Activated B cell treated with CpG ODN at 0.5 μM for 24 hours (primary cell): ENCODE measurements at regions of chr1 and their contacts with region 1.

Region 1: DNA sequence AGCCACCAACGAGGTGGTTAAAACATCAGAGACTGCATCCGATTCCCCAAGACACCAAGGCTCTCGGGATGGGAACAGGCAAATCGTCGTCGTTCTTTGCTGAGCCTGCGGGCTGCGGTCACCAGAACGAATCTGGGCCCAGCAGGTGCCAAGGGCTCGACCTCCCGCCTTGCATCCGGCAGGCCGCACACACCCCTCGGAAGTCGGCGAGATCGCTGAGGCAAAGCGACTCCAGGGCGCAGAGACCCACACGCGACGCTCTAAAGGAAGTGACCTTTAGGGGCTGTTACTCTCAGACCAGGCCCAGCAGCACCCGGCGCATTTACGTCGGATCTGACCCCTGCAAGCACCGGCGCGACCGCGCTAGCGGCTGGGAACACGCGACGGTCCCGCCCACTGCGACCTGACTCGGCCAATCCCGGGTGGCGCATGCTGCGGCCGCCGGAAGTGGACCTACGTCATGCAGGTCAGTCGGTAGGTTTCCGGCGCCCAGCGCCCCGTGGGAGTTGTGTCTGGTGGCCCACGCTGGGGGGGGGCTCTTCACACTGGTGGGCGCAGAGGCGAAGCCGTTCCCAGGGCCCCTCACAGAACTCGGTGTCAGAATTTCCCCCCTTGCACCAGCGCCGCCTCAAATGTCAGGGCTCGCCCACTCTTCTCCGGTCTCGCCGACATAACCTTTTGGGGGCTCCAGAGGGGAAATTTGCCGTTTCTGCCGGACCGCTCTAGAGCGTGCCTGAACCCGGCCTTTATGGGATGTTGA is 7.5 kb upstream of the PARK7 start:
- DNase-seq: peak; percentile 83
- ATAC-seq: peak; percentile 90
- H3K4me3 Mint-ChIP-seq: peak overlapping the region; percentile 89
- H3K27ac Mint-ChIP-seq: peak overlapping the region; percentile 95
- H3K4me1 Mint-ChIP-seq: peaks cover 15% of the 10 kb centered on the region
- H3K27me3 Mint-ChIP-seq: no peaks in the 10 kb centered on the region
- CTCF ChIP-seq: no peak

Region 2: GRCh38 chr1:7912743-7913557 is 41.1 kb before region 1 on chr1:
- CTCF ChIA-PET with region 1: no interaction called
- POLR2A ChIA-PET with region 1: interaction called, 4 read pairs
- intact Hi-C with region 1: loop called (anchors 5 kb)
- DNase-seq: peak; percentile 16
- ATAC-seq: peak; percentile 86
- H3K4me3 Mint-ChIP-seq: peak overlapping the region; percentile 91
- H3K27ac Mint-ChIP-seq: peak overlapping the region; percentile 82
- H3K4me1 Mint-ChIP-seq: peaks cover 13% of the 10 kb centered on the region
- H3K27me3 Mint-ChIP-seq: peaks cover 3% of the 10 kb centered on the region
- CTCF ChIP-seq: no peak

Region 3: DNA sequence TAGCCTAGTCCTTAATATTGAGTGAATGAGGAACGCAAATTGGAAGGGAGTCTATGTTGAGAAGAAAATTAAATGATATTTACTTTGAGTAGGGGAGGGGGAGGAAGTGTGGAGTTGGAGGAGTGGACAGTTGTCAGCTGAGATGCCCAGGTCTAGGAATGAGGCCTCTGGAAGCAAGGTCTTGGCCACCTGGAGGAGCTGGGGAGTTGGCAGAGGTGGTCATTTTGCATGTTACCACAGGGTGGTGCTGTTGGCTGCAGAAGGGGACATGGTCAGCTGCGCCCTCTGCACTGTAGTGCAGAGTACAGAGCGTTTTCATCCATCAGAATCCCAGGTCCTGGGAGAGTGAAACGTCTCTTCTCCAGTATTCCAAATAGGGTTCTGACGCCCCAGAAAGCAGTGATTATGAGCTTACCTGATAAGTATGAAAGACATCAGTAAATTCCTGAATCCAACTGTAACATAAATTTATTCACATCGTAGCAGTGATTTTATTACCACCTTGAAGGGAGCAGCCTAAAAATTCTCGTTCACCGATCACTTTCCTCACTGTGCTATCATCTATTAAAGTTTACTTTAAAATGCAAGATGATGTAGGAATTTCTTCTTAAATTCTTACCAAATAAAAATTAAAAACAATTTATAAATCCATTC is 21.3 kb after region 1 on chr1:
- CTCF ChIA-PET with region 1: no interaction called
- POLR2A ChIA-PET with region 1: no interaction called
- intact Hi-C with region 1: no loop called
- DNase-seq: no peak
- ATAC-seq: peak; percentile 50
- H3K4me3 Mint-ChIP-seq: no peak overlapping the region
- H3K27ac Mint-ChIP-seq: no peak overlapping the region
- H3K4me1 Mint-ChIP-seq: peaks cover 2% of the 10 kb centered on the region
- H3K27me3 Mint-ChIP-seq: no peaks in the 10 kb centered on the region
- CTCF ChIP-seq: no peak